ENCODE measurements at regions of chr1 and their contacts with region 1.

Region 1: DNA sequence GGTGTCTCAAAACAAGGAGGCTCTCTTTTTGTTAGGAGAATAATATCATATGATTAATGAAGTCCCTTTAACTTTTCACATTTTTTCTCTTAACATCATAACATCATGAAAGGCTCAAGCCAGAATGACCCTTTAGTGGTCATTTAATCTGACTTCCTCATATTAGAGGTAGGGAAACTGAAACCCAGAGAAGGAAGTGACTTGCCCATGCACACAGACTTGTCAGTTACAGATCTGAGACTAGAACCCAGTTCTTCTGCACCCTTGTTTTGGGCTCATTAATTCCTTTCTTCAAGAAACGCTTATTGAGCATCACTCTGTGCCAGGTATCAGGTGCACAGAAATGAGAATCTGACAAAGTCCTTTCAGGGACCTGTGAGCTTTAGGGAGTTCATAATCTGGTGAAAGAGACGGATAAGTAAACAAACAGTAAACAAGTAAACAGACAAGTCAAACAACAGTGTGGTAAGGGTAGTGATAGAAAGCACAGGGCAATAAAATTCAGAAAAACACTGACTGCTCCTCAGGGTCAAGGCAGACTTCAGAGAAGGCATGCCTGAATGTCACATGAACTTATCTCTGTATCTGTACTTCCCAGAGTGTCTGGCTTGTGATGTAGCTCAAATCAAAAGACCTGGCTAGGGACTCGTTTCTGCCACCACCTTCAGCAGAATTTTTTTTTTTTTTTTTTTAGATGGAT is 38.4 kb upstream of the OSBPL9 start:
- DNase-seq: no peak
- ATAC-seq: no peak
- H3K4me3 ChIP-seq: no peak overlapping the region
- H3K4me3 Mint-ChIP-seq: no peak overlapping the region
- H3K27ac ChIP-seq: no peak overlapping the region
- H3K27ac Mint-ChIP-seq: no peak overlapping the region
- H3K4me1 ChIP-seq: peaks cover 9 to 12% of the 10 kb centered on the region in 2 experiments
- H3K4me1 Mint-ChIP-seq: peaks cover 20 to 30% (median 27%) of the 10 kb centered on the region in 3 donors
- H3K27me3 ChIP-seq: no peaks in the 10 kb centered on the region
- H3K27me3 Mint-ChIP-seq: no peaks in the 10 kb centered on the region

Region 2: GRCh38 chr1:51491166-51491981 is 87.2 kb before region 1 on chr1:
- CTCF ChIA-PET with region 1: no interaction called
- POLR2A ChIA-PET with region 1: no interaction called
- DNase-seq: no peak
- ATAC-seq: no peak
- H3K4me3 ChIP-seq: no peak overlapping the region
- H3K4me3 Mint-ChIP-seq: peak overlapping the region in 1 of 3 donors; percentile 35
- H3K27ac ChIP-seq: peak overlapping the region; percentile 3
- H3K27ac Mint-ChIP-seq: peak overlapping the region; percentile 71 to 77
- H3K4me1 ChIP-seq: peaks cover 3 to 9% of the 10 kb centered on the region in 2 experiments
- H3K4me1 Mint-ChIP-seq: peaks cover 56 to 65% (median 63%) of the 10 kb centered on the region in 3 donors
- H3K27me3 ChIP-seq: no peaks in the 10 kb centered on the region
- H3K27me3 Mint-ChIP-seq: no peaks in the 10 kb centered on the region

Region 3: GRCh38 chr1:51600529-51600928 is 22.0 kb after region 1 on chr1:
- CTCF ChIA-PET with region 1: no interaction called
- POLR2A ChIA-PET with region 1: interaction called in 1 of 2 experiments, 16 read pairs
- DNase-seq: no peak
- ATAC-seq: no peak
- H3K4me3 ChIP-seq: no peak overlapping the region
- H3K4me3 Mint-ChIP-seq: no peak overlapping the region
- H3K27ac ChIP-seq: no peak overlapping the region
- H3K27ac Mint-ChIP-seq: no peak overlapping the region
- H3K4me1 ChIP-seq: no peaks in the 10 kb centered on the region
- H3K4me1 Mint-ChIP-seq: no peaks in the 10 kb centered on the region
- H3K27me3 ChIP-seq: peaks cover 0 to 3% of the 10 kb centered on the region in 2 experiments
- H3K27me3 Mint-ChIP-seq: no peaks in the 10 kb centered on the region